A673 (cell line): ENCODE measurements at regions of chr17 and their contacts with region 1.

Region 1: GRCh38 chr17:7045909-7046724 is 2.2 kb upstream of the SLC16A11 start:
- DNase-seq: peak; percentile 86
- H3K4me3 ChIP-seq: peak overlapping the region; percentile 9
- H3K27ac ChIP-seq: no peak overlapping the region
- H3K4me1 ChIP-seq: peaks cover 20% of the 10 kb centered on the region
- H3K27me3 ChIP-seq: no peaks in the 10 kb centered on the region
- CTCF ChIP-seq: peak; percentile 89

Region 2: GRCh38 chr17:5486204-5487124 is 1559.7 kb before region 1 on chr17 and contains the start of gene MIS12:
- CTCF ChIA-PET with region 1: no interaction called
- POLR2A ChIA-PET with region 1: no interaction called
- intact Hi-C with region 1: no loop called
- DNase-seq: peak; percentile 100
- H3K4me3 ChIP-seq: peak within 1 kb of the TSS; percentile 80
- H3K27ac ChIP-seq: peak within 1 kb of the TSS; percentile 99
- H3K4me1 ChIP-seq: peaks cover 14% of the 10 kb centered on the region
- H3K27me3 ChIP-seq: no peaks in the 10 kb centered on the region
- CTCF ChIP-seq: no peak
- total RNA-seq, gene MIS12: 30.6 and 33.9 TPM in 2 replicates

Region 3: DNA sequence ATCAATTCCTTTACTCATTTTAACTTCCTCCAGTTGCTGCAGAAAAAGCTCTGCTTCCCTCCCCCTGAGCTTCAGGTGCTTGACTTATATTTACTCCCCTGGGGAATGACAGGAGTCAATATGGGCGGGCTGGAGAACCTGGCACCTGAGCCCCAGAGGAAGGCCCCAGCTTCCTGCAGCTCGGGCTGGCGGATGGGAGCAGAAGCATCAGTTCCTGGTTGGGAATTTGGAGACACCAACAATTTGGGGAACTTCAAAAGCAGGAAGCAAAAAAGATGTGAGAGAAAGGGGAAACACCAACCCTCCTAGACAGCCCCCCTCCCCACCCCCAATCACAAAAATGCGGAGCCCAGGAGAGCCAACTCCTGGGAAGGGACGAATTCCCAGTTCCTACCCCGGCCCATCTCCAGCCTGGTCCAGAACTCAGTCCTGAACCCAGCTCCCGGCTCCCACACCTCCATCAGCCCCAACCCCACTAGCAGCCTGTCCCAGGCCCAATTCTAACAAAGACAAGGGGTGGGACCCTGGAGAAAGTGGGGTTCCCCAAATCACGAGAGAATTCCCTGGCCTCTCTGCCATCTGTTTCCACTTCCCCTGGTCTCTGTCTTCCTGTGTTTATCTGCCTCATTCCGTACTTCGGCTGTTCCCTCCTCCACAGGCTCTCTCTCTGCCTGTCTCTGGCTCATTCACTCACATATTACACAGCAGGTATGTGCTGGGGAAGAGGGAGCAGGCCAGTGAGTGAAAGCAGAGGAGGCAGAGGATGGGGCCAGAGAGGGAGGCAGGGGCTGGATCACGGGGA is 84.7 kb after region 1 on chr17:
- CTCF ChIA-PET with region 1: interaction called, 19 read pairs
- POLR2A ChIA-PET with region 1: no interaction called
- intact Hi-C with region 1: no loop called
- DNase-seq: no peak
- H3K4me3 ChIP-seq: no peak overlapping the region
- H3K27ac ChIP-seq: peak overlapping the region; percentile 35
- H3K4me1 ChIP-seq: peaks cover 21% of the 10 kb centered on the region
- H3K27me3 ChIP-seq: no peaks in the 10 kb centered on the region
- CTCF ChIP-seq: no peak

Region 4: DNA sequence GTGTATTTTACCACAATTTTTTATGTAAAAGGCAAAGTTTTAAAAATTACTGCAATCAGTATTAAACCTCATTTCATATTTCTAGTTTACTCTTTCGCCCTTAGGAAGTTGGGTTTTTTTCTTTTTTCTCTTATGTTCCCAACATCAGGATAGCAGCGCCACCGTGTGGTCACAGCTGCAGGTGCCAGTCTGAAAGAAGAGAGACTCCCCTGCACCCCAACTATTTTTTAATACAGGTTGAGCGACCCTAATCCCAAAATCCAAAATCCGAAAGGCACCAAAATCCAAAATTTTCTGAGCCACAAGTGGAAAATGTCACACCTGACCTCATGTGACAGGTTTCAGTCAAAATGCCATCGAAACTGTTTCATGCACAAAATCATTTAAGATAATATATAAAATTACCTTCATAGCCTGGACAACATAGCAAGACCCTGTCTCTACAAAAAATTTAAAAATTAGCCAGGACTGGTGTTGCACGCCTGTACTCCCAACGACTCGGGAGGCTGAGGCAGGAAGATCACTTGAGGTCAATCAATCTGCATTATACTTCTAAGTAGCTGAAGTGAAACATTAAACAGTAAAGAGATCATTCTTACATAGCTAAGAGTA is 90.3 kb after region 1 on chr17:
- CTCF ChIA-PET with region 1: interaction called, 19 read pairs
- POLR2A ChIA-PET with region 1: no interaction called
- intact Hi-C with region 1: no loop called
- DNase-seq: peak; percentile 82
- H3K4me3 ChIP-seq: peak overlapping the region; percentile 38
- H3K27ac ChIP-seq: no peak overlapping the region
- H3K4me1 ChIP-seq: peaks cover 15% of the 10 kb centered on the region
- H3K27me3 ChIP-seq: no peaks in the 10 kb centered on the region
- CTCF ChIP-seq: peak; percentile 98

Region 5: GRCh38 chr17:7296189-7296902 is 250.2 kb after region 1 on chr17:
- CTCF ChIA-PET with region 1: interaction called, 14 read pairs
- POLR2A ChIA-PET with region 1: no interaction called
- intact Hi-C with region 1: loop called (anchors 2 kb)
- DNase-seq: peak; percentile 85
- H3K4me3 ChIP-seq: peak overlapping the region; percentile 24
- H3K27ac ChIP-seq: no peak overlapping the region
- H3K4me1 ChIP-seq: peaks cover 22% of the 10 kb centered on the region
- H3K27me3 ChIP-seq: no peaks in the 10 kb centered on the region
- CTCF ChIP-seq: peak; percentile 94

Region 6: GRCh38 chr17:7336240-7337175 is 290.4 kb after region 1 on chr17 and contains the start of gene ACAP1:
- CTCF ChIA-PET with region 1: no interaction called
- POLR2A ChIA-PET with region 1: no interaction called
- intact Hi-C with region 1: no loop called
- DNase-seq: no peak
- H3K4me3 ChIP-seq: no peak within 1 kb of the TSS
- H3K27ac ChIP-seq: no peak within 1 kb of the TSS
- H3K4me1 ChIP-seq: no peaks in the 10 kb centered on the region
- H3K27me3 ChIP-seq: no peaks in the 10 kb centered on the region
- CTCF ChIP-seq: no peak
- total RNA-seq, gene ACAP1: 1.1 TPM in 2 replicates

Region 7: GRCh38 chr17:7466639-7467341 is 420.7 kb after region 1 on chr17:
- CTCF ChIA-PET with region 1: no interaction called
- POLR2A ChIA-PET with region 1: no interaction called
- intact Hi-C with region 1: no loop called
- DNase-seq: no peak
- H3K4me3 ChIP-seq: no peak overlapping the region
- H3K27ac ChIP-seq: no peak overlapping the region
- H3K4me1 ChIP-seq: no peaks in the 10 kb centered on the region
- H3K27me3 ChIP-seq: no peaks in the 10 kb centered on the region
- CTCF ChIP-seq: no peak